Sciatic nerve (tissue), 2 donors: ENCODE measurements at regions of chr11 and their contacts with region 1.

Region 1: DNA sequence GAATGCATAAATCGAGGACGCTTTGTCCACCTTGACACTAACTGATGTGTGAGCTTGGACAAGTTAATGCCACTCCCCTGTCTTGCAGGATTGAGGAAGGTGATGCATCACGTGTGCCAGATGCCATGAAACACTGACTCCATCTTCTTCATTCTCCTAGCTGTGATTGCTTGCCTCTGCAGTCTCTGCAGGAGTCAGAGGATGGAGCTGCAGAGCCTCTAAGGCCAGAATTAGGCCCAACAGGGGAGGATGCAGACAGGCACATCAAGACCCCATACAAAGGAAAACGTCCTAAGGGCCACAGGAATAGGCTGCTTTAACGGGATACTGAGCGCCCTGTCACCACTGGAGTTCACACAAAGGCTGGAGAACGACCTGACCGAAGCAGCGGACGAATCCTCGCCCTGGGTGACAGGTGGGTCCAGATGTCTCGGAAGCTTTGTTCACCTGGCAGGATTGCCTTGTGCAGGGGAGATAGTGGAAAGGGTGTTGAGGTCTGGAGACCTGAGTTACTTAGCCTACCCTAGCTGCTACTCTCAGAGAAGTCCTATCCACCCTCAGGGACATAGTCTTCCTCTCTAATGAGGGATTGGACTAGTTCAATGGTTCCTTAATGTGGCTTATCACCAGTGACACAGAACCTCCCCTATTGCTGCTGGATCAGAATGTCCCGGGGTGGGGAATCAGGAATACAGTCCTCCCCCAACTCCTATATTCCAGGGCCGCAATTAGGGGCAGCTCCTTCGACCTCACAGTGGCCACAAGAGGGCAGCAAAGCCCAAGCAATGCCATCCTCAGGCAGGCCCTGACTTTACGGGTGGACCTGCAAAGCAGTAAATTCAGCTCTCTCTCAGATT is 32.4 kb downstream of the DBX1 start:
- DNase-seq: peak; percentile 88
- ATAC-seq: peak; percentile 80

Region 2: GRCh38 chr11:19410032-19410431 is 717.9 kb before region 1 on chr11:
- intact Hi-C with region 1: no loop called
- DNase-seq: no peak
- ATAC-seq: no peak

Region 3: DNA sequence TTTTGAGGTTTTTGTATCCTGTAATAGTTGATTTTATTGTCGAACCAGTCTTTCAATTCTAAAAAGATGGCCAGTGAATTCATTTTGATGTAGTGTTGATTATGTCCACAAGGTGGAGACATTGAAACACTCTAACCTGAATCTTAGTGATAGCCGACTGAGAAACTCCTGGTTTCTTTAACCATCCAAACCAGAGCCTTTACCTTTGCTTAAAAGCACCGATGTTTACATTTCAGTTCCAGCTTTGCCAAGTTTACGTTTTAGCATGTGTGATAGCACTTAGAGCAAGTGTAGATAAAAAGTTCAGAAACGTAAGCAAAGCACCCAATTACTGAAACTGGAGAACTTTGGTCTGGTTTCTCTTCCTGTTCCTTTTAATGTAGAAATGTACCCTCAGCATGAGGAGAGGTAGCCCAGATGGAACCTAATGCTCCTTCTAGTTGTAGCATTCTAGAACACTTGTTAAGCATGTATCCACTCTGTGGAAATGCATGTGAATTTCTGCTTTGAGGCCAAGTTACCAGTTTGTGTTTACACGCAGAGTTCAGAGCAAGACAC is 176.3 kb before region 1 on chr11:
- intact Hi-C with region 1: loop called (anchors 2 kb)
- DNase-seq: no peak
- ATAC-seq: peak; percentile 21

Region 4: DNA sequence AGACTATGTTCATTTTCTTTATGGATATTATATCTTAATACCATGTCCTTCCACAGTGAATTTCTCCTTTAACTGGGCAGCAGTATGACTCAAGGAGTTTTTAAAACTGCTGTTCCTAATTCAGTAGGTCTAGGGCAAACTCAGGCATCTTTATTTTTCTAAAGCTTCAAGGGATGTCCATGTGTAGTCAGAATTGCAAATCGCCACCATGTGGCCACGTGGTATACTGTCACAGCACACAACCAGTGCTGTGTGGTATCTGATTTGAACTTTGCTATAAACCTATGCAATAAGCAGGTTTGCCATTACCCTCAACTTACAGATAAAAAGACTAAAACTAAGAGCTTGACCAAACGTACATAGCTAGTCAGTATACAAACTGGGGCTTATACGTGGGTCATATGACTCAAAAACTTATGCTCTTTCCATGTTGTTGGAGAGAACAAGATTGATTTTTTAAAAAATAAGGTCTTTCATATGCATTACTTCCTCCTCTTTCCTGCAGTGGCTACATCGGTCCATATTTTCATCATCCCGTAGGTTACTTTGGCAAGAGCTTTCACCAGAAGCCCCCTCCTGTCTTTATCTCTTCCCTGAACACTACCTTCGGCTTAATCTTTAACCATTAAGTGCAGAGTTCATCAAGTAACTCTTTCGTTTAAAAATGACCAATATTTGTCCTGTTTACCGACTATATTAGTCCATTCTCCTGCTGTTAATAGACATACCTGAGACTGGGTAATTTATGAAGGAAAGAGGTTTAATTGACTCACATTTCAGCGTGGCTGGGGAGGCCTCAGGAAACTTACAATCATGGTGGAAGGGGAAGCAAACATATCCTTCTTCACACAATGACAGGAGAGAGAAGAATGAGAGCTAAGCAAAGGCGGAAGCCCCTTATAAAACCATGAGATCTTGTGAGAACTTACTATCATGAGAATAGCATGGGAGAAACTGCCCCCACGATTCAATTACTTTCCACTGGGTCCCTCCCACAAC is 227.6 kb after region 1 on chr11:
- intact Hi-C with region 1: loop called (anchors 10 kb)
- DNase-seq: no peak
- ATAC-seq: peak; percentile 28